SK-N-SH (cell line): ENCODE measurements at regions of chr10 and their contacts with region 1.

Region 1: DNA sequence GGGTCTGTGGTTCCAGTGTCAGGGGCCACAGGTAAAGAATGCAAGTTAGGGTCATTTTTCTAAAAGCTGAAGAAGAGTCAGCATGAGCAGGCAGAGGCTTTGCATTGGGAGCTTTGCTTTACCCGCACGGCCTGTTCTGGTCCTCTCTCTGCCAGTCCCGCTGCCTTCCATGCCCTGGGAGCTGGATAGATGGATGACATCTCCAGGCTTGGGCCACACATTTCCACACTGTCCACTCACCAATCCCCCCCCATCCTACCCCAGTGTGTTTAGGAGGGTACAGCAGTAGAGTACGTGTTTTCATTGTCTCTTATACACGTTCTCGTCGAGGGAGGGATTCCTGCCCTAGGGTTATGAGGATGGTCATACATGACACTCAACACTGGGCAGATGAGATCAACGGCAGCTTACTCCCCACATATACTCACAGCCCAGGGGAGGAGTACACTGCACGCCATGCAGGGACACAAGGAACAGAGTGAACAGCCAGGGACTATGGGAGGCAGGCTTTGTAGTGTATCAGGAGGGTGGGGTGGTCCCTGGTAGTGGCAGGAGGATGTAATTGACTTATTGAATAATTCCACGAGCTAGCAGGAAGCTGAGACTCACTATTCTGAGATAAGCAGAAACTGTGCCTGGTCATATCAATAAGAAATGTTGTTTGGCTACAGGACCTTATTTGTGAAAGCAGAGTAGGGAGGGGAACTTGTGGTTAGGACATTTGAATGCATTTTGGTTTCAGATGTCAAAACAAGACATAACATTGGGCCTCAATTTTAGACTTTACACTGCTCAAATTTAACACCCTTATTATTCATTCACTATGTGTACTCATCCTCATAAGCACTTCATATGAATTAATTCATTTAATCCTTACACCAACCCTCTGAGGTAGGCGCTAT is 36.6 kb downstream of the PLPP4 start:
- DNase-seq: no peak
- H3K4me3 ChIP-seq: no peak overlapping the region
- H3K27ac ChIP-seq: no peak overlapping the region
- H3K4me1 ChIP-seq: peaks cover 0 to 9% of the 10 kb centered on the region in 2 experiments; a peak in 1 of 4 replicates
- H3K27me3 ChIP-seq: no peaks in the 10 kb centered on the region
- CTCF ChIP-seq: no peak
- EP300 ChIP-seq: no peak
- RAD21 ChIP-seq: no peak

Region 2: DNA sequence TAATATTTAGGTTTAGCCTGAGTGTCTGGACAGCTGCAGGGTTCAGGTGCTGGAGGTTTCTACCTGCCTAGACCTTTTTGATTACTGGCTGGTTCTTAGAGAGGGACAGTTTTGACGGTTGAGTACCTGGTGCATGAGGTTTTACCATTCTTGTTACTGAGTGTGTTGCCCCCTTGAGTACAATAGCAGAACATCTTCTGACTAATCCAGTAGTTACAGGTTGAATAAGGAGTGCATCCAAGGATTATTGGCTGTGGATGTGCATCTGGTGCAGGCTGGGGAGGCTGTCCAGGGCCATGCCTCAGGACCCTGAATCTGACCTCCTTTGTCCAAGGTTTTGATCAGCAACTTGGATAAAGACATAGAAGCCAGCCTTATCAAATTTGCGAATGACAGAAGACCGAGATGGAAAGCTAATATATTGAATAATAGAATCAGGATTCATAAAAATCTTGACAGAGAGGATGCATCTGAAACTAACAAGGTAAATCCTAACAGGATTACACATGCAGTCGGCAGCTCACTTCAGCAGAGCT is 13.5 kb before region 1 on chr10:
- CTCF ChIA-PET with region 1: interaction called, 10 read pairs
- POLR2A ChIA-PET with region 1: no interaction called
- DNase-seq: peak; percentile 31
- H3K4me3 ChIP-seq: no peak overlapping the region
- H3K27ac ChIP-seq: peak overlapping the region in 1 of 2 experiments; percentile 2; a peak in 1 of 4 replicates
- H3K4me1 ChIP-seq: peaks cover 23 to 29% of the 10 kb centered on the region in 2 experiments
- H3K27me3 ChIP-seq: no peaks in the 10 kb centered on the region
- CTCF ChIP-seq: peak; percentile 49
- EP300 ChIP-seq: no peak
- RAD21 ChIP-seq: peak; percentile 52

Region 3: GRCh38 chr10:120572307-120572706 is 78.6 kb after region 1 on chr10:
- CTCF ChIA-PET with region 1: no interaction called
- POLR2A ChIA-PET with region 1: no interaction called
- DNase-seq: no peak
- H3K4me3 ChIP-seq: no peak overlapping the region
- H3K27ac ChIP-seq: no peak overlapping the region
- H3K4me1 ChIP-seq: no peaks in the 10 kb centered on the region; a peak in 1 of 4 replicates
- H3K27me3 ChIP-seq: no peaks in the 10 kb centered on the region
- CTCF ChIP-seq: no peak
- EP300 ChIP-seq: no peak
- RAD21 ChIP-seq: no peak